H1 (cell line): ENCODE measurements at regions of chr2 and their contacts with region 1.

Region 1: DNA sequence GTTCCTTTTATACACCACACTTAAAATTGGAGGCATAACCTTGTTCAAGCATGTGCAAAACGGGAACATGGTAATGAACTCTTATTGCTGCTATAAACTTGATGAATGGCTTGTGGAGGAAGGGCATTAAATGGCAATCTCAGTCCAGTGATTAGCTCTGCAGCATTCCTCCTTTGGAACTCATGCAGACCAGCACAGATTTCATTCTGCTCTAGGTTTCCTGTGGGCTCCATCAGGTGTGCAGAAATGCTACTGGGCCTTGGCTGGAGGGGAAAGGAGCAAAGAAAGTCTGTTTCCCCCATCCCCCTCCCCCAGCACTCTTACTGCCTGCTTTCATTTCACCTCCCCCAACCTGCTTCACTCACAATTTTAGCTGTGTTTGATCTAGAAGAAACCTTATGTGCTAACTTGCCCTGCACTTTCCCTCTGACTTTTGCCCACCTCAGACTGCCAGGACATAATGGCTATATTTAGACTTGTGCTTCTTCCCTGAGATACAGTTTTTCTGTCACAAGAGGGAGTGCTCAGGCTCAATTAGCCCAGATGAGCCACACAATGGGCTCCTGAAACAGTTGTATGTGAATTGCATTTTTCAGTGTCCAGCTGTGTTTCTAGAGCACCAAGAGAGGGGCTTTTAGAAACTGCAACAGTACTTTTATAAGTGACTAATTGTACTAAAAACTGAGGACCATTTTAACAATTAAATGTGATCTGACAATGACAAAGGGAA is 109.8 kb downstream of the FSHR start:
- DNase-seq: no peak
- H3K4me3 ChIP-seq: no peak overlapping the region
- H3K27ac ChIP-seq: no peak overlapping the region
- H3K4me1 ChIP-seq: peaks cover 0 to 6% (median 3%) of the 10 kb centered on the region in 4 experiments; a peak in 4 of 7 replicates
- H3K27me3 ChIP-seq: no peaks in the 10 kb centered on the region
- CTCF ChIP-seq: peak in 2 of 3 experiments; percentile 59 to 62; a peak in 3 of 4 replicates
- EP300 ChIP-seq: no peak
- POLR2A ChIP-seq: no peak
- RAD21 ChIP-seq: peak; percentile 69 to 75

Region 2: GRCh38 chr2:49004036-49004626 is 40.4 kb before region 1 on chr2:
- CTCF ChIA-PET with region 1: no interaction called
- POLR2A ChIA-PET with region 1: no interaction called
- DNase-seq: no peak
- H3K4me3 ChIP-seq: no peak overlapping the region
- H3K27ac ChIP-seq: no peak overlapping the region
- H3K4me1 ChIP-seq: no peaks in the 10 kb centered on the region
- H3K27me3 ChIP-seq: peaks cover 0 to 1% (median 0%) of the 10 kb centered on the region in 4 experiments; a peak in 1 of 7 replicates
- CTCF ChIP-seq: no peak
- EP300 ChIP-seq: no peak
- POLR2A ChIP-seq: no peak
- RAD21 ChIP-seq: no peak

Region 3: GRCh38 chr2:49033394-49034185 is 10.9 kb before region 1 on chr2:
- CTCF ChIA-PET with region 1: interaction called, 10 read pairs
- POLR2A ChIA-PET with region 1: no interaction called
- DNase-seq: no peak
- H3K4me3 ChIP-seq: no peak overlapping the region
- H3K27ac ChIP-seq: no peak overlapping the region
- H3K4me1 ChIP-seq: no peaks in the 10 kb centered on the region
- H3K27me3 ChIP-seq: no peaks in the 10 kb centered on the region
- CTCF ChIP-seq: no peak
- EP300 ChIP-seq: no peak
- POLR2A ChIP-seq: no peak
- RAD21 ChIP-seq: no peak